ENCODE measurements at regions of chr13 and their contacts with region 1.

Region 1: GRCh38 chr13:29911781-29912418 is 61.5 kb upstream of the UBL3 start:
- DNase-seq: no peak
- ATAC-seq: no peak
- H3K4me3 Mint-ChIP-seq: no peak overlapping the region
- H3K27ac Mint-ChIP-seq: no peak overlapping the region
- H3K4me1 Mint-ChIP-seq: peaks cover 16% of the 10 kb centered on the region
- H3K27me3 Mint-ChIP-seq: peaks cover 2% of the 10 kb centered on the region

Region 2: DNA sequence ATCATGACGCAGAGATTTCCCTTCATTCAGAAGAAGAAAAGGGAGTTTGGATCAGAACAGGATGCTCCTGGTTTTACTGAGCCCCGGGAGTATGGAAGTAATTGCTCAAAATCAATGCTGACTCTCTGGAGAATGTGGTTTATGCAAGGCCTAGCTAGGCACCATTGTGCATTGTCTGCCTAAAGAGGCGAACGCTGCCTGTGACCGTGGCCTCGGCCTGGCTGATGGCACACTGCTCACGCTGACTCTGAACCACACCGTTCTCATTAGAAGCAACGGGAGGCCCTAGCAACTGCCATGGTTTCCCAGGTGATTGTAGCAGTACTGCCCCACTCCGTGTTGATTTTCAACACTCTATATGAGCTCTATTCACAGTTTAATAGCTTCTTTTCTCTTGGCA is 19.7 kb before region 1 on chr13:
- CTCF ChIA-PET with region 1: no interaction called
- DNase-seq: no peak
- ATAC-seq: no peak
- H3K4me3 Mint-ChIP-seq: no peak overlapping the region
- H3K27ac Mint-ChIP-seq: no peak overlapping the region
- H3K4me1 Mint-ChIP-seq: peaks cover 9% of the 10 kb centered on the region
- H3K27me3 Mint-ChIP-seq: no peaks in the 10 kb centered on the region

Region 3: DNA sequence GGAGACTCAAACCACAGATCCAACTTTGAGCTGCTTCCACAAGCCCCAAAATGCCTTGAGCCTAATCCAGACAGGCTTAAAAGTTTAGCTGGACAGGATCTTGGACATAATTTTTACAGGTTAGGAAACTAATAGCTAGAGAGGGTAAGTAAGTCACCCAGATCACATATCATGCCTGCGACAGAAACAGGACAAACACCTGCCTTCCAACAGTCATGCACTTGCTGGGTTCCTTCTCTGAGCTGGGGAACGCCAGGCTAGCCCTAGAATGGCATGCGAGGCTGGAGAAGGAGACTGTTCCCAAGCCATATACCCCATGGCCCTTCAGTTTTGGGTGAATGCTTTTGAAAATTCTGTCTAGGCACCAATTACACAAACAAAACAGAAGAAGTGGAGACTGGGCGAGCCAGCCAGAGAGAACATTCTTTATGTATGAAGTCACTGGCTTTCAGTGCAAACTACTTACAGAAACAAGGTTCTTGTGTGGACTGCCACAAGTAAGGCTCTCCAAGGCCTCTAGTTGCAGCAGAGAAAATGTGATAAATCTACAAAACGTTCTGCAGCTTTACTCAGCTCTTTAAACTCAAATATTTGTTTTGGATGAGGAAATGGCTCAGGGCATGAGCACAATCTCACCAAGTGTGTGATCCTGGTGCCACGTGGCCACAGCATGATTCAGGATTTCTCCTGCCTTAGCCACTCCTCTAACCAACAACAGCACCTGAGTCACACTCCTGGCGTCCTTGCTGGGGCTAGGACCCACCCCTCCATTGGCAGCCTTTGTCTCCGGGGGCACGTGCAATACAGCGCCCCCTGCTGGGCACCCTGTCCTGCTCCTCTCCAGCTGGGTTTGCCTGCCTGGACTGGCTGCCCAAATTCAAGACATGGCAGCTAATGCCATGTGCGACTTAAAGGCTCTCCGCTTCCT is 11.9 kb after region 1 on chr13:
- CTCF ChIA-PET with region 1: interaction called, 10 read pairs
- DNase-seq: peak; percentile 65
- ATAC-seq: peak; percentile 55
- H3K4me3 Mint-ChIP-seq: no peak overlapping the region
- H3K27ac Mint-ChIP-seq: no peak overlapping the region
- H3K4me1 Mint-ChIP-seq: peaks cover 30% of the 10 kb centered on the region
- H3K27me3 Mint-ChIP-seq: no peaks in the 10 kb centered on the region